Activated CD4-positive, alpha-beta T cell treated with anti-CD3 and anti-CD28 coated beads, Interleukin-2, amount 10 ng/mL, durations not matched to agents 24 days and 14 days (primary cell): ENCODE measurements at regions of chr6 and their contacts with region 1.

Region 1: GRCh38 chr6:150238336-150238741 is 95.5 kb downstream of the PPP1R14C start:
- DNase-seq: no peak
- H3K4me3 Mint-ChIP-seq: no peak overlapping the region
- H3K27ac Mint-ChIP-seq: no peak overlapping the region
- H3K4me1 Mint-ChIP-seq: peaks cover 14% of the 10 kb centered on the region
- H3K27me3 Mint-ChIP-seq: peaks cover 12% of the 10 kb centered on the region

Region 2: GRCh38 chr6:149335924-149336608 is 902.3 kb before region 1 on chr6:
- intact Hi-C with region 1: no loop called
- DNase-seq: peak; percentile 72
- H3K4me3 Mint-ChIP-seq: peak overlapping the region; percentile 74
- H3K27ac Mint-ChIP-seq: peak overlapping the region; percentile 87
- H3K4me1 Mint-ChIP-seq: peaks cover 69% of the 10 kb centered on the region
- H3K27me3 Mint-ChIP-seq: no peaks in the 10 kb centered on the region

Region 3: GRCh38 chr6:150169609-150170008 is 68.7 kb before region 1 on chr6:
- intact Hi-C with region 1: loop called (anchors 1 kb)
- DNase-seq: peak; percentile 57
- H3K4me3 Mint-ChIP-seq: no peak overlapping the region
- H3K27ac Mint-ChIP-seq: peak overlapping the region; percentile 30
- H3K4me1 Mint-ChIP-seq: peaks cover 9% of the 10 kb centered on the region
- H3K27me3 Mint-ChIP-seq: peaks cover 17% of the 10 kb centered on the region

Region 4: GRCh38 chr6:150256618-150257272 is 18.4 kb after region 1 on chr6:
- intact Hi-C with region 1: loop called (anchors 1 kb)
- DNase-seq: no peak
- H3K4me3 Mint-ChIP-seq: no peak overlapping the region
- H3K27ac Mint-ChIP-seq: no peak overlapping the region
- H3K4me1 Mint-ChIP-seq: peaks cover 32% of the 10 kb centered on the region
- H3K27me3 Mint-ChIP-seq: peaks cover 13% of the 10 kb centered on the region

Region 5: GRCh38 chr6:150320442-150320841 is 82.1 kb after region 1 on chr6:
- intact Hi-C with region 1: no loop called
- DNase-seq: no peak
- H3K4me3 Mint-ChIP-seq: no peak overlapping the region
- H3K27ac Mint-ChIP-seq: no peak overlapping the region
- H3K4me1 Mint-ChIP-seq: no peaks in the 10 kb centered on the region
- H3K27me3 Mint-ChIP-seq: peaks cover 6% of the 10 kb centered on the region